ENCODE measurements at regions of chr5 and their contacts with region 1.

Region 1: GRCh38 chr5:10578869-10579268 is 15.0 kb downstream of the ANKRD33B start:
- DNase-seq: peak; percentile 49
- ATAC-seq: no peak
- H3K4me3 Mint-ChIP-seq: no peak overlapping the region
- H3K27ac Mint-ChIP-seq: no peak overlapping the region
- H3K4me1 Mint-ChIP-seq: peaks cover 47% of the 10 kb centered on the region
- H3K27me3 Mint-ChIP-seq: peaks cover 6% of the 10 kb centered on the region

Region 2: DNA sequence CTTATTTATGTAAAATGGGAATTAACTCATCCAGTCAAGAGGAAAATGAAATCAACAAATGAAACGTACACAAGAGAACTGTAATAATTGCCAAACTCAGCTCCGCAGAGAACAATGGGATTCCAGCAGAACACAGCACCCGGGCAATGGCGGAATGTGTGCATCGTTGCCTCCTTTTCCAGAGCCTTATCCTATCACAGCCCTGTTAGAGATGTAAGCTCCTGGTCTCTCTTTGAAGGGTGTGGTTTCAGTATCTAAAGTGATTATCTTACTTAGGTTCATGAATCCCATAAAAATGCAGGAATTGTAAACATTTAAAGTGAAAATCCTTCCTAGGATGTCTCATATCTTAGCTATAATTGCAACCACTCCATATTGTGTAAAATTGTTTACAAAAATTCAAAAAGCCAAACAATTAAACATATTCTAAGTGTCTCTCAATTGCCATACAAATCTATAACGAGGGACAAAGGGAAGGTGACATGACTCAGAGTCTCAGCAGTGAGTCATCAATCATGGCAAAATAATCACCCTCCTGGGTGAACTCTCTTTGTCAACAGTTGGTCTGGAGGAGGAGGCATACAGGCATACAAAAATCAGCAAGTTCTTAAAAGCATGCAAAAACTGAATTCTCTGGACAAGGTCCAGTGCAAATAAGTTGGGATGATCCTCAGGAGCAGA is 1055.6 kb before region 1 on chr5:
- CTCF ChIA-PET with region 1: no interaction called
- POLR2A ChIA-PET with region 1: no interaction called
- intact Hi-C with region 1: no loop called
- DNase-seq: no peak
- ATAC-seq: no peak
- H3K4me3 Mint-ChIP-seq: no peak overlapping the region
- H3K27ac Mint-ChIP-seq: no peak overlapping the region
- H3K4me1 Mint-ChIP-seq: no peaks in the 10 kb centered on the region
- H3K27me3 Mint-ChIP-seq: peaks cover 2% of the 10 kb centered on the region

Region 3: GRCh38 chr5:10595678-10596309 is 16.9 kb after region 1 on chr5:
- CTCF ChIA-PET with region 1: no interaction called
- POLR2A ChIA-PET with region 1: no interaction called
- intact Hi-C with region 1: loop called (anchors 1 kb)
- DNase-seq: peak; percentile 71
- ATAC-seq: peak; percentile 87
- H3K4me3 Mint-ChIP-seq: no peak overlapping the region
- H3K27ac Mint-ChIP-seq: no peak overlapping the region
- H3K4me1 Mint-ChIP-seq: peaks cover 40% of the 10 kb centered on the region
- H3K27me3 Mint-ChIP-seq: peaks cover 14% of the 10 kb centered on the region

Region 4: DNA sequence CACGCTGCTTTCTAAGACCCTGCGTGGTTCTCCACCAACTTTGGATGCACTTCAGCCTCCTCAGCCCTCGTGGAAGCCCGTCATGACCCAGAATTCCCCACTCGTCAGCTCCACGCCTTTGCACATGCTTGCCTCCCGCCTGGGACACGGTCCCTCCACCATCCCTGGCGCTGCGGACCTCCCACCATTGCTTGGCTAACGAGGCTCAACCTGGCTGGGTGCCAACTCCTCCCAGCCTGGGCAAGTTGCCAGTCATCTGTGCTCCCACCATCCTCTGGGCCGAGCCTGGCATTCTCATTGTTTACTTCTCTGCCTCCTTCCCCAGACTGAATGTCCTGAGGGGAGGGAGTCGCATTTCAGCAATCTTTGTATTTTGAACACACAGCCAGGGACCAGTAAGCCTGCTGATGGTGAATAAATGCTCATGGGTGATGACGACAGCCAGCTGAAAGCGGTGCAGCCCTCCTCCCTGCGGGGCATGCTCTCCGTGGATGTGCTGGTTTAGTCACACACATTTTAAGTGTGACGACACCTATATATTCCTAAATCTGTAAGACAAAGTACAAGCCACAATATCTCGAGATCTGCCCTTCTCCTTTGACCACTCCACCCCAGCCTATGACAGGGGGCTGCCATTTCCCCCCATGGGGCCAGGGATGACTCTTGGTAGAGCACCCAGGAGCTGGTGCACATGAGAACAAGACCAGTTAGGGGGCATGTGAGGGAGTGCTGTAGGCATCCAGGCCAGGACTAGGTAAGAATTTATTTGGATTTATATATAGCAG is 22.6 kb after region 1 on chr5:
- CTCF ChIA-PET with region 1: interaction called, 3 read pairs
- POLR2A ChIA-PET with region 1: no interaction called
- intact Hi-C with region 1: loop called (anchors 1 kb)
- DNase-seq: peak; percentile 19
- ATAC-seq: peak; percentile 61
- H3K4me3 Mint-ChIP-seq: no peak overlapping the region
- H3K27ac Mint-ChIP-seq: no peak overlapping the region
- H3K4me1 Mint-ChIP-seq: peaks cover 27% of the 10 kb centered on the region
- H3K27me3 Mint-ChIP-seq: peaks cover 6% of the 10 kb centered on the region

Measured in activated CD4-positive, alpha-beta T cell treated with anti-CD3 and anti-CD28 coated beads for 36 hours (primary cell).